HepG2 (cell line): ENCODE measurements at regions of chr14 and their contacts with region 1.

Region 1: DNA sequence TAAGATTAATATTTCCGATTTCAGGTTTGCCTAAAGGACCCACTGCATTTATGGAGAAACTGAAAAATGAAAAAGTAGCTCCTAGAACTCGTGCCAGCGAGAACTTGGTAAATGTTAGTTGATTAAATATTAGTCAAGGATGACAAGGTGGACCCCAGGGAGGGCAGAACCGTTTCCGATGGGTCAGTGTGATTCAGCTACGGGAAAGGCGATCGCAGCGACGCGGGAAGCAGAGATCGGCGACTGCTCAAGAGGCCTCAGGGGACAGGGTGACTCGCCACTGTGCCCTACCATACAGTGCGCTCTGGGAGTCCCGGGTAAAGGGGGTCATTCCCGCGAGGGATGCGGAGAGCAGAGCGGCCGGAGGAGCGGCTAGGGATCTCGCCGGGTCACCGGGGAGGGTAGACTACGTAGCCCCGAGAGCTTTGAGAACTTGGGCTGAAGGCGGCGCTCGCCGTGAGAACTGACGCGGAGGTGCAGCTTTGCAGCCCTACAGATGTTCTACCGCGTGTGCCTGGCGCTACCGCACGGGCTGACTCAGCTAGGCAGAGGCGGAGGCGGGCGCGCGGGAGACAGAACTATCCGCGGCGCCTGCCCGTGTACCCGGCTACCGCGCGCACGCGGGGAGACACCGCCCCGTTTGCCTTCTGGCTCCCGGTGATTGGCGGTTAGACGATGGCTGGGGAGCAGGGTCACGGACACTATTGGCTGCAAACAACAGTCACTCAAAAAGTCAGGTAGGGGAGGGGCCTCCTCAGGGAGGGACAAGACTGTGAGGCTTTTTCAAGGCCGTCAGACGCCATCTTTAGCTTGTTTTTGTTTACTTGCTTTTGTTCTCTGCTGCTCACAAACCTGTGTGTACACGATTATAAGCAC is 3.2 kb downstream of the C14orf93 start:
- DNase-seq: peak; percentile 100
- ATAC-seq: peak; percentile 97
- H3K4me3 ChIP-seq: peak overlapping the region; percentile 68 to 82 (median 80)
- H3K27ac ChIP-seq: peak overlapping the region; percentile 86
- H3K4me1 ChIP-seq: peaks cover 52% of the 10 kb centered on the region
- H3K27me3 ChIP-seq: no peaks in the 10 kb centered on the region; a peak in 1 of 5 replicates
- CTCF ChIP-seq: peak; percentile 76
- EP300 ChIP-seq: peak in 1 of 2 experiments; percentile 9; a peak in 3 of 4 replicates
- POLR2A ChIP-seq: peak; percentile 96 to 98
- RAD21 ChIP-seq: peak; percentile 91

Region 2: GRCh38 chr14:22579236-22579635 is 427.5 kb before region 1 on chr14:
- CTCF ChIA-PET with region 1: no interaction called
- POLR2A ChIA-PET with region 1: no interaction called
- in situ Hi-C with region 1: no loop called
- intact Hi-C with region 1: no loop called
- DNase-seq: no peak
- ATAC-seq: no peak
- H3K4me3 ChIP-seq: no peak overlapping the region
- H3K27ac ChIP-seq: no peak overlapping the region
- H3K4me1 ChIP-seq: peaks cover 11% of the 10 kb centered on the region
- H3K27me3 ChIP-seq: no peaks in the 10 kb centered on the region
- CTCF ChIP-seq: no peak
- EP300 ChIP-seq: no peak
- POLR2A ChIP-seq: no peak
- RAD21 ChIP-seq: no peak

Region 3: DNA sequence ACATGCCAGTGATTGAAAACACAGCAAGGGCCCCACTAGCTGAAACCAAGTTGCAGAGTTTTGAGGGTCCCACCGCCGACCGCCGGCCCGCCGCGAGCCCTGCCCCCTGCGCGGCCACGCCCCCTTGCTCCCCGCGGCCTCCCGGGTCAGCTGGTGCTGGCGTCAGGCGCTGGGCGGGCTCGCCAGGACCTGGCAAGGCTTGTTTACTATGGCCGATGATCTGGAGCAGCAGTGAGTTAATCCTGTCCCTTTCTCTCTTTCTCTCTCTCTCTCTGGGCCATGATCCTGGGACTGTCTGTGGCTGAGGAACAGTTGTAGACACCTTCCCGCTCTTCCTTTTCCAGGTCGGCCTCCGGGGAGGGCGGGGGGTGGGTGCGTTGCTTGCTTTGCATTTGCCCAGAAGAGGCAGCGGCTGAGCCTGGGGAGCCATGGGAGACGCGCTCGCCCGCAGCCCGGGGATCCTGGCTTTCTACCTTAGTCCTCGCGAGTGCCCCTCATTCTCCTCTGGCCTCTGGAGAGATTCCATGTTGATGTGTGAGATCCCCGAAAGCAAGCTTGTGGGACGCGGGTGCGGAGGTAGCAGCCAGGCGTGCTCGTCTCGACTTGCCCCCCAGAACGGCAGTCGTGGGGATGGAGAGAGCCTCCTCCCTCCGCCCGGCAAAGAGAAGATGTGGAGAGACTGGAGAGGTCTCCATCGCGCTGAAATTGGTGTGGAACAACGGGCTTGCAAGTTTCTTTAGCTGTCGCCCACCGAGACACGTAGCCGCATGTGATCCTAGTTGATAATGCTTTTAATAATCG is 408.5 kb before region 1 on chr14 and contains the start of gene ABHD4:
- CTCF ChIA-PET with region 1: no interaction called
- POLR2A ChIA-PET with region 1: interaction called, 4 read pairs
- in situ Hi-C with region 1: no loop called
- intact Hi-C with region 1: loop called (anchors 5 kb)
- DNase-seq: peak; percentile 79
- ATAC-seq: peak; percentile 95
- H3K4me3 ChIP-seq: peak within 1 kb of the TSS; percentile 76 to 94 (median 82)
- H3K27ac ChIP-seq: peak within 1 kb of the TSS; percentile 73
- H3K4me1 ChIP-seq: peaks cover 34% of the 10 kb centered on the region
- H3K27me3 ChIP-seq: peaks cover 0 to 13% of the 10 kb centered on the region in 2 experiments; a peak in 2 of 5 replicates
- CTCF ChIP-seq: no peak
- EP300 ChIP-seq: peak; percentile 32 to 50; a peak in 2 of 4 replicates
- POLR2A ChIP-seq: peak in 1 of 2 experiments; percentile 85; a peak in 2 of 4 replicates
- RAD21 ChIP-seq: 0 out of 2 replicates have a peak, but pooled peaks have one; percentile 6
- total RNA-seq, gene ABHD4: 16.1 and 22.8 TPM in 2 replicates

Region 4: GRCh38 chr14:22966783-22967269 is 40.0 kb before region 1 on chr14:
- CTCF ChIA-PET with region 1: no interaction called
- POLR2A ChIA-PET with region 1: interaction called, 561 read pairs
- in situ Hi-C with region 1: no loop called
- intact Hi-C with region 1: no loop called
- DNase-seq: no peak
- ATAC-seq: peak; percentile 32
- H3K4me3 ChIP-seq: no peak overlapping the region
- H3K27ac ChIP-seq: peak overlapping the region; percentile 59
- H3K4me1 ChIP-seq: peaks cover 34% of the 10 kb centered on the region
- H3K27me3 ChIP-seq: no peaks in the 10 kb centered on the region
- CTCF ChIP-seq: no peak
- EP300 ChIP-seq: no peak
- POLR2A ChIP-seq: peak in 1 of 2 experiments; percentile 60; a peak in 3 of 4 replicates
- RAD21 ChIP-seq: no peak

Region 5: GRCh38 chr14:22994762-22995275 is 12.0 kb before region 1 on chr14:
- CTCF ChIA-PET with region 1: no interaction called
- POLR2A ChIA-PET with region 1: interaction called, 160 read pairs
- in situ Hi-C with region 1: no loop called
- intact Hi-C with region 1: loop called (anchors 1 kb)
- DNase-seq: peak; percentile 67
- ATAC-seq: peak; percentile 94
- H3K4me3 ChIP-seq: no peak overlapping the region
- H3K27ac ChIP-seq: no peak overlapping the region
- H3K4me1 ChIP-seq: peaks cover 5% of the 10 kb centered on the region; the same call in 1 of the 2 replicates
- H3K27me3 ChIP-seq: no peaks in the 10 kb centered on the region
- CTCF ChIP-seq: peak; percentile 90
- EP300 ChIP-seq: no peak
- POLR2A ChIP-seq: no peak
- RAD21 ChIP-seq: peak; percentile 87

Region 6: GRCh38 chr14:23052182-23052623 is 45.4 kb after region 1 on chr14:
- CTCF ChIA-PET with region 1: no interaction called
- POLR2A ChIA-PET with region 1: interaction called, 72 read pairs
- in situ Hi-C with region 1: no loop called
- intact Hi-C with region 1: no loop called
- DNase-seq: peak; percentile 65
- ATAC-seq: peak; percentile 62
- H3K4me3 ChIP-seq: no peak overlapping the region
- H3K27ac ChIP-seq: no peak overlapping the region
- H3K4me1 ChIP-seq: peaks cover 25% of the 10 kb centered on the region
- H3K27me3 ChIP-seq: peaks cover 0 to 6% of the 10 kb centered on the region in 2 experiments; a peak in 1 of 5 replicates
- CTCF ChIP-seq: peak; percentile 99
- EP300 ChIP-seq: no peak
- POLR2A ChIP-seq: no peak
- RAD21 ChIP-seq: peak; percentile 97

Region 7: DNA sequence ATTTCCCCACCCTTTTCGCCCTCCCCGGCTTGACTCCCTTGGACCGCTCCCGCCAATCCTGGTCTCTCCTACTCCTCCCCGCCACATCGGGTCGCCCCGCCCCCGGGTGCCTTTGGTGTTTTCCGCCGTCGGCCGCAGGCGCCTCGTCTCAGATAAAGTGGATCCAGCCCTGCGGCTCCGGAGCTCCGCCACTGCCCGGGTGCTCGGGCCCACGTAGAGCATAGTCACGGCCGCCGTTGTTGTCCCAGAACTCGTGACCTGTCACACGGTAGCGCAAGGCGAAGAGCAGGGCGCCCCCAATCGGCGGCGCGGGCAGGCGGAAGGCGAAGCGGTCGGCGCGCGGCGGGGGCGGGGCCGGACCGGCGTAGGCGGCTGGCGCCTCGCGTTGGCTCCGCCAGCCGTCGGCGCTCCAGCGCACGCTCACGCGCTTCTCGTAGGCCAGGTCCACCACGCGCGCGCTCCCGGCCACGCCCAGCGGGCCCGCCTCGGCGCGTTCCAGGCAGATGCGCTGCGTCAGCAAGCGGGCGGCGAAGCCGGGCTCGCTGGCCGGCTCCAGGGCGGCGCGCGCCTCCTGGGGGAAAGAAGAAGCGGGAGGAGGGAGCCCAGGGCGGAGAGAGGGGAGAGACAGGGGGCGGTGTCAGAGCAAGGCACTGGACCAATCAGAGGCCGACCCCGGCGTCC is 294.6 kb after region 1 on chr14:
- CTCF ChIA-PET with region 1: no interaction called
- POLR2A ChIA-PET with region 1: interaction called, 12 read pairs
- in situ Hi-C with region 1: no loop called
- intact Hi-C with region 1: no loop called
- DNase-seq: peak; percentile 100
- ATAC-seq: peak; percentile 87
- H3K4me3 ChIP-seq: peak overlapping the region; percentile 67 to 88 (median 75)
- H3K27ac ChIP-seq: peak overlapping the region; percentile 91
- H3K4me1 ChIP-seq: peaks cover 57% of the 10 kb centered on the region
- H3K27me3 ChIP-seq: no peaks in the 10 kb centered on the region; a peak in 1 of 5 replicates
- CTCF ChIP-seq: peak; percentile 92
- EP300 ChIP-seq: peak in 1 of 2 experiments; percentile 54; a peak in 2 of 4 replicates
- POLR2A ChIP-seq: no peak
- RAD21 ChIP-seq: peak; percentile 87